PC-9 (cell line): ENCODE measurements at regions of chr14 and their contacts with region 1.

Region 1: GRCh38 chr14:104137297-104138097 is 890 bp upstream of the KIF26A start:
- DNase-seq: peak in 1 of 2 experiments; percentile 55
- H3K4me3 ChIP-seq: no peak overlapping the region
- H3K27ac ChIP-seq: no peak overlapping the region
- H3K4me1 ChIP-seq: no peaks in the 10 kb centered on the region
- H3K27me3 ChIP-seq: peaks cover 32% of the 10 kb centered on the region
- CTCF ChIP-seq: peak; percentile 57; the same call in 1 of the 2 replicates

Region 2: DNA sequence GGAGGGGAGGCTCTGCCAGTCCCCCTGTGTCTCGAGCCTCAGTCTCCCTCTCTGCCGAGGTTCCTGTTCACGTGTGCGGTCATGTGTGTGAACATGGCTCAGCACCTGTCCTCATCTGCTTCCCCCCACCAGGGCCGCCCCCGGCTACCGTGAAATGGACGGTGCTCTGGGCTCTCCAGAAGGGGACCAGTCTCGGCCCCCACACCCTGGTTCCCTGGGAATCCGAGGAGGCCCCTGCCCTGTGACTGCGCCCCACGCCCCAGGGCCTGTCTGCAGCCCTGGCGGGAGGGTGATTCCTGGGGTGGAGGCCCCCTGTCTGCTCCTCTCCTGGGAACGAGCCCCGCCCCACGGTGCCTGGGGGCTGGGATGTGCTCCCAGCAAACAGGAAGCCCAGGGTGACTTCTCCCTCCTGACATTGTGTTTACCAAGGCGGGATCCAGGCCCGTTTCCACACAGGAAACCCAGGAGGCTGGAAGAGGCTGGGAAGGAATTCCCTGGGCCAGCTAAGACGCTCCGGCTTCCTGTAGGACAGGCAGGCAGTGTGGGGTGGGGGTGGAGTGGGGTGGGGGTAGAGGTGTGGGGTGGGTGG is 47.5 kb after region 1 on chr14:
- CTCF ChIA-PET with region 1: no interaction called
- POLR2A ChIA-PET with region 1: no interaction called
- intact Hi-C with region 1: no loop called
- DNase-seq: no peak
- H3K4me3 ChIP-seq: no peak overlapping the region
- H3K27ac ChIP-seq: no peak overlapping the region
- H3K4me1 ChIP-seq: no peaks in the 10 kb centered on the region
- H3K27me3 ChIP-seq: peaks cover 70% of the 10 kb centered on the region
- CTCF ChIP-seq: no peak

Region 3: DNA sequence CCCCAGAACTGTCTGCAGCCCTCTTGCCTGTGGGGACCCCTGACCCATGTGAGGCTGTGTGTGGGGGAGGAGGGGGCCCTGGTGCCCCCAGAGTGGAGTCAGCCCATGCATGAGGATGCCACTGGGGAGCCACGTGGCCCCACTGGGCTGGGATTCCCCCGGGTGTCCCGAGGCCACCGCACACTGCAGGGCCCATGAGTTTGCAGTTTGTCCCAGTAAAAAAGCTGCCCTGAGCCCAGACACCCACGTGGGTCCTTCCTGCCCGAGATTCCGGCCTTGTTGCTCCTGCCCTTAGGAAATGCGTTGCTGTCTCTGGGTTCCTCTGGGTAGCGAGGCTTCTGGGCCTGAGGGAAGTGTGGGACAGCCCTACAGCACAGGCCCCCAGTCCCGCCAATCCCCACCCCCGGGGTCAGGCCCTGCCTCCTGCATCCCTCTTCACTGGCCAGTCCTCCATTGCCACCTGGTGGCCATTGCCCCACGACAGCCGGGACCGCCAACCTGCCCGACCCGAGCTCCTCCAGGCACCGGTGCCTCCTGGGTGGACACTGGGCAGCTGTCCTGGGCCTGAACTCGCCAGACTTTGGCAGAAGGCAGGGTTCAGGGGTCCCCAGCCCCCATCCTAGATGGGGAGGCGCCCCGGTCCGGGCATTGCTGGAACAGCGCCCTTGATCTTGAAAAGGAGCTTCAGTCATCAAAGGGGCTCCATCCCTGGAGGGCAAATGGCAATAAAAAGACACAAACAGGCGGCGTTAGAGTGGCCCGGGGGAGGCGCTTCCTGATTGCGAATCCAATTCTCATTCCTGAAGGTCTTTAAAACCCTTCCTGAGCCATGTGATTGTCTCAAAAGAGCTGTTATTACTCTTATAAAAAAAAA is 426.5 kb after region 1 on chr14:
- CTCF ChIA-PET with region 1: no interaction called
- POLR2A ChIA-PET with region 1: no interaction called
- intact Hi-C with region 1: loop called (anchors 2 kb)
- DNase-seq: peak in 1 of 2 experiments; percentile 62
- H3K4me3 ChIP-seq: no peak overlapping the region
- H3K27ac ChIP-seq: no peak overlapping the region
- H3K4me1 ChIP-seq: no peaks in the 10 kb centered on the region
- H3K27me3 ChIP-seq: peaks cover 91% of the 10 kb centered on the region
- CTCF ChIP-seq: peak; percentile 80

Region 4: DNA sequence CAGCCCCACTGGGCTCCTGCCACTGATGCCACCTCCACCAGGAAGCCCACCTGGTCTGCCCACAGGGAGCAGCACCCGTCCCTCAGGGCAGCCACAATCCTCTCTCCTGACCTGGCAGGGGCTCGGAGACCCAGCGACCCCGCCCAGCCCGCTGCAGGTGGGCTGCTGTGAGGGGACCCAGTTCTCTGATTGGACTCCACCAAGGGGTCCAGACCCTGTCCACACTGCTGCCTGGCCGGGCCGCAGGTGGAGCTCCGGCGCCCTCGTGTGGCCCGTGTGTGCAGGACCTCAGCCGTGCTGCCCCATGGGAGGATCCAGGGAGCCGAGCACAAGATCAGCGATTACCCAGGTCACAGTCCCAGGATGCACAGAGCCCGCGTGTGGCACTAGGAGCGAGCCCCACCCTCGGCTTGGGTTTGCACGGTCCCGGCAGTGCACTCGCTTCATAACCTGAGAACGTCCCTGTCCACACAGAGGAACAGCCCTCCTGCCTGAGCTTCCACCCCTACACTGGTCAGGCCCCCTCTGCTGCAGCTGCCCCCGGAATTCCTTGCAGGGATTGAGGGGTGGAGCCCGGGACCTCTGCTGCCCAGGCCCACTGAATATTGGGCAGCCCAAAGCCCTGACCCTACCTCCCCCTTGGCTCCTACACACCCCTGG is 502.5 kb after region 1 on chr14:
- CTCF ChIA-PET with region 1: no interaction called
- POLR2A ChIA-PET with region 1: no interaction called
- intact Hi-C with region 1: loop called (anchors 5 kb)
- DNase-seq: peak; percentile 42 to 62
- H3K4me3 ChIP-seq: no peak overlapping the region
- H3K27ac ChIP-seq: no peak overlapping the region
- H3K4me1 ChIP-seq: no peaks in the 10 kb centered on the region
- H3K27me3 ChIP-seq: peaks cover 56% of the 10 kb centered on the region
- CTCF ChIP-seq: peak; percentile 92